Activated CD4-positive, alpha-beta memory T cell treated with anti-CD3 and anti-CD28 coated beads, Interleukin-2, amount 10 ng/mL, durations not matched to agents 7 days and 5 days (primary cell): ENCODE measurements at regions of chr14 and their contacts with region 1.

Region 1: DNA sequence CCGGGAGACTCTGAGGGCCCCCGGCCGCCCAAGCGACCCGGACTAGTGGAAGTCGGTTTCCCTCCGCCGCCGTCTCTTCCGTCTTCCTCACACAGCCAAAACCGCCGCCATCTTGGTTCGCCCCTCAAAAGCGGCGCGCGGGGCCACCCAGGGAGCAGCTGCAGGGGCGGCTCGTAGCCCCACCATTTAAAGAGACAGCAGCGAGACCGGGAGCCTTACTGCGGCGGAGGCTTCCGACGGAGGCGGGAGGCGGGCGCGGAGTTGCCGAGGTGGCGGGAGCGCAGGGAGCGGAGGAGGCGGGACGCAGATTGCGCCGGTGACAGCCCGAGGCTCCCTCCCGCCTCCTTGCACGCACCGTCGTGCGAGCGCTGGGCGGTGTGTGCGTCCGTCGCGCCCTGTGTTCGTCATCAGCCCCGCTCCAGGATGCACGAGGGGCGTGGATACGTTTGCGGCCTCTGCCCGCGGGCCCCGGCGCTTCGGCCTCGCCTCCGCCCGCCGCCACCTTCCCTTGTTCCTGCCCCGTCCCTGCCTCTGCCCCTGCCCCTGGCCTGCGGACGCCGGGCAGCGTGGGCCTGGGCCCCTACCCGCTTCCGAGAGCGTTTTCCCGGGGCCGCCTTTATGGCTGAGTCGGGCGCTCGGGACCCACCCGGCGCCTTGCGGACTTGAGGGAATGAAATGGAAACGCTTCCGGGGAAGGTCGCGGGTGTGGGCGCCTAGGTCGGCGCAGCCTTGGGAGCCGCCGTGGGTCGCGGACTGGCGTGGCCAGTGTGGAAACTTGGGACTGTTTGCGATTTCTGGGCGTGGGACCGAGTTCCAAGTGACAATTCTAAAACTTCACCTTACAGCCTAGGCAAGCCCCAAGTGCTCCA is at the start of gene PPP4R3A:
- DNase-seq: peak; percentile 94
- H3K4me3 Mint-ChIP-seq: peak within 1 kb of the TSS; percentile 98
- H3K27ac Mint-ChIP-seq: peak within 1 kb of the TSS; percentile 100
- H3K4me1 Mint-ChIP-seq: peaks cover 24% of the 10 kb centered on the region
- H3K27me3 Mint-ChIP-seq: no peaks in the 10 kb centered on the region
- total RNA-seq, gene PPP4R3A: 118 to 123 TPM

Region 2: GRCh38 chr14:91373591-91374254 is 136.7 kb before region 1 on chr14:
- CTCF ChIA-PET with region 1: no interaction called
- POLR2A ChIA-PET with region 1: interaction called, 10 read pairs
- DNase-seq: peak; percentile 69
- H3K4me3 Mint-ChIP-seq: peak overlapping the region; percentile 71
- H3K27ac Mint-ChIP-seq: peak overlapping the region; percentile 94
- H3K4me1 Mint-ChIP-seq: peaks cover 99% of the 10 kb centered on the region
- H3K27me3 Mint-ChIP-seq: no peaks in the 10 kb centered on the region

Region 3: GRCh38 chr14:91496790-91497189 is 13.6 kb before region 1 on chr14:
- CTCF ChIA-PET with region 1: interaction called, 4 read pairs
- POLR2A ChIA-PET with region 1: interaction called, 22 read pairs
- DNase-seq: no peak
- H3K4me3 Mint-ChIP-seq: no peak overlapping the region
- H3K27ac Mint-ChIP-seq: no peak overlapping the region
- H3K4me1 Mint-ChIP-seq: peaks cover 71% of the 10 kb centered on the region
- H3K27me3 Mint-ChIP-seq: no peaks in the 10 kb centered on the region

Region 4: DNA sequence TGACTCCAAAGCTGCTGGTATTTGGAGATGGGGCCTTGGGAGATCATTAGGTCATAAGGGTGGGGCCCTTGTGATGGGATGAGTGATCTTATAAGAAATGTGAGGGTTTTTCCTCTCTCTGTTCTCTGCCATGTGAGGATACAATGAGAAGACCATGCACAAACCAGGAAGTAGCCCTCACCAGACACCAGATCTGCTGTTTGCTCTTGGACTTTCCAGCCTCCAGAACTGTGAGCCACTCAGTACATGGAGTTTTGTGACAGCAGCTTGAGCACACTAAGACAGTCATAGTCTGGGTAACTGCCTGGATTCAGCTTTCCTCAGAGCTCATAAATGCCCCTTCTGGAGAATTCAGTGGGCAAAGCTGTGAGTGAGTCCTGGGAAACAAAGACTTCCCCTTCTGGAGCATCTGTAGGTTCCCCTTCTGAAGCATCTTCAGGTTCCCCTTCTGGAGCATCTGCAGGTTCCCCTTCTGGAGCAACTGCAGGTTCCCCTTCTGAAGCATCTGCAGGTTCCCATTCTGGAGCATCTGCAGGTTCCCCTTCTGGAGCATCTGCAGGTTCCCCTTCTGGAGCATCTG is 10.7 kb after region 1 on chr14:
- CTCF ChIA-PET with region 1: no interaction called
- POLR2A ChIA-PET with region 1: no interaction called
- DNase-seq: no peak
- H3K4me3 Mint-ChIP-seq: no peak overlapping the region
- H3K27ac Mint-ChIP-seq: no peak overlapping the region
- H3K4me1 Mint-ChIP-seq: peaks cover 9% of the 10 kb centered on the region
- H3K27me3 Mint-ChIP-seq: peaks cover 3% of the 10 kb centered on the region

Region 5: DNA sequence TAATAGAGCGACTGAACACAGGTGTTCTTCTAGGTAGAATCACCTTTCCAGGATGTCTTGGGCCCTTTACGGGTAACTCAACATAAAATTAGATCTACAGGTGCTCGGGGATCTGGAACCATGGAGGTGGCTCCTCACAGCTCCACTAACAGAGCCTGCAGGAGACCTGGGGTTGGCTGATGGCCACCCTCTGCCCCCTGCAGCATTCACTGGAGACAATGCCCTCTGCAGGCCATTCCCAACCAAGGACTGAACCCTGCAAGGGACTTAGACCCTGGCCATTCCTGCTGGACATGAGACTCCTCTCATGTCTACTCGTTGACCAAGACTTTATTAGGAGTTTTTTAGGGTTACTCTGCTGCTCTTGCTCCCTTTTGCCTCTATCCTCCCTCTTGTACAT is 58.2 kb after region 1 on chr14:
- CTCF ChIA-PET with region 1: no interaction called
- POLR2A ChIA-PET with region 1: no interaction called
- DNase-seq: no peak
- H3K4me3 Mint-ChIP-seq: no peak overlapping the region
- H3K27ac Mint-ChIP-seq: no peak overlapping the region
- H3K4me1 Mint-ChIP-seq: no peaks in the 10 kb centered on the region
- H3K27me3 Mint-ChIP-seq: peaks cover 14% of the 10 kb centered on the region

Region 6: GRCh38 chr14:91866061-91866460 is 355.7 kb after region 1 on chr14:
- CTCF ChIA-PET with region 1: no interaction called
- POLR2A ChIA-PET with region 1: interaction called, 32 read pairs
- DNase-seq: peak; percentile 53
- H3K4me3 Mint-ChIP-seq: peak overlapping the region; percentile 94
- H3K27ac Mint-ChIP-seq: peak overlapping the region; percentile 95
- H3K4me1 Mint-ChIP-seq: peaks cover 77% of the 10 kb centered on the region
- H3K27me3 Mint-ChIP-seq: no peaks in the 10 kb centered on the region

Region 7: DNA sequence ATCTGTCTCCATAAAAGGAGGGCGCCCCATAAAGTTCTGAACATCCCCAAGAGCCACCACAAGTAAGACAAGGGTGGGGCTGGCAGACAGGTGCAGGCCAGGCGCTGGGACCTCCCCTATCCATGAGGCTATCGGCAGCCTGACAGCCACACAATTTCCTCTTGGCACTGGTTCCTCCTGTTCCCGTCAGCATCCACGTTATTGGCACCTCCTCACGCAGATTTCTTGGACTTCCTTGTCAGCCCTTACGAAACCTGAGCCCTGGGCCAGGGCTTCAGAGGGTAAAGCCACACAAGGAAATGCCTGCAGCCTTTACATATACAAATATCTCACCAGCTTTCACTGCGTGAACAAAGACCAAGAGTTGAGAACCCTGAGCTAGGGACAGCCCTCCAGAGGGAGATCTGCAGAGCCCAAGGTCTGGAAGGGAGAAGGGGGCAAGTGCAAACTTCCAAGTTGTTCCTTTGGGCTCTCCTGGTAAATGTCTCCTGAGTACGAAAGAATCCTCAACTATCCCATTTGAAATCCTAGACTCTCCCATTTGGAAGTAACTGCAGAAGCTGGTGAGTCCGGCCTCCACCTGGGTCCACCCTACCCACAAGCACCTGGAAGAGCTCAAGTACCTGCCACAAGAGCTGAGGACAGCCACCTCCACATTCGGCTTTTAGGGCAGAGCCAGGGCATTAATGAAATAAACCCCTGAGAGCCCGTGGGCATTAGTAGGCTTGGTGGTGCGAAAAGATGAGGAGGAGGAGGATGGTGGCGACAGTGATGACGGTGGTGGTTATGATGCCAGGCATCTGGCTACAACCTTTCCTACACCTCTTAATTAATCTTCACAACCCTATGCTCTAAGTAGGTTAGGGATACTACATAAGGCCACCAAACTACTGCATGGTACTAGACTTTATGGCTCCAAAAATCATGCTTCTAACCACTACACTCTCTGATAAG is 362.4 kb after region 1 on chr14:
- CTCF ChIA-PET with region 1: no interaction called
- POLR2A ChIA-PET with region 1: interaction called, 32 read pairs
- DNase-seq: peak; percentile 42
- H3K4me3 Mint-ChIP-seq: peak overlapping the region; percentile 68
- H3K27ac Mint-ChIP-seq: peak overlapping the region; percentile 95
- H3K4me1 Mint-ChIP-seq: peaks cover 81% of the 10 kb centered on the region
- H3K27me3 Mint-ChIP-seq: no peaks in the 10 kb centered on the region

Region 8: DNA sequence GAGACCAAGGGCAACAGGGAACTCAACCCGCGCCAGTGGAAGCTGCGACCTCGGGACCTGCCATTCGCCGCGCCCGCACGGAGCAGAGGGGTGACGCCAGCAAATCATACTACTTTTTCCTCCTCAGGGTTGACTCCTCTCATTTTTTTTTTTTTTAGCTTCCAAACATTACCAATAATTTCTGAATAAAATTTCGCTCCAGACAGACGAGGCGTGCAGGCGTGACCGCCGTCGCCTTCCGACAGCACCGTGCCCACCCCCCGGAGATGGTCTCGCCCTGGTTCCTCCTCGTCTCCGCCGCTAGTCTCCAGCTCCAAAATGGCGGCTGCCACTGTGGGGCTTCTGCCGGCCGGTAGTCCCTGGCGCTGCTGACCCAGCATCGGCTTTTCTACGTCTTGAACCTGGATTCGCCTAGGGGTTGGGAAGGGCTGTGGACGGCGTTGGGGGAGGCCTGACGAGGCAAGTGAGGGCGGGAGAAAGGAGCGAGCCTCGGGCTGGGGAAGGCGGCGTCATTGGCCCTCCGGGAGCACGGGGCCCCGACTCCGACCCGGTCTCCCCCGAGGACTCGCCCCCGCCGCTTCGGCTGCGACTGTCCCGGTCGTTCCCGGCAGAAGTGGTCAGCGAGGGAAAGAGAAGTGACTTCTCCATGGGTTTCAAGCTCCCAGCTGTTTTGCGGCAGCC is 611.4 kb after region 1 on chr14 and contains the starts of genes CPSF2 and NDUFB1:
- CTCF ChIA-PET with region 1: no interaction called
- POLR2A ChIA-PET with region 1: interaction called, 15 read pairs
- DNase-seq: peak; percentile 86
- H3K4me3 Mint-ChIP-seq: peak within 1 kb of the TSS; percentile 85
- H3K27ac Mint-ChIP-seq: peak within 1 kb of the TSS; percentile 97
- H3K4me1 Mint-ChIP-seq: peaks cover 50% of the 10 kb centered on the region
- H3K27me3 Mint-ChIP-seq: no peaks in the 10 kb centered on the region
- total RNA-seq, gene CPSF2: 74.5 to 79.3 TPM
- total RNA-seq, gene NDUFB1: 136 to 140 TPM